ENCODE measurements at regions of chr12 and their contacts with region 1.

Region 1: GRCh38 chr12:89470741-89471509 is 53.7 kb downstream of the GALNT4 start:
- DNase-seq: no peak
- H3K4me3 Mint-ChIP-seq: no peak overlapping the region
- H3K27ac Mint-ChIP-seq: peak overlapping the region; percentile 84
- H3K4me1 Mint-ChIP-seq: peaks cover 81% of the 10 kb centered on the region
- H3K27me3 Mint-ChIP-seq: no peaks in the 10 kb centered on the region

Region 2: DNA sequence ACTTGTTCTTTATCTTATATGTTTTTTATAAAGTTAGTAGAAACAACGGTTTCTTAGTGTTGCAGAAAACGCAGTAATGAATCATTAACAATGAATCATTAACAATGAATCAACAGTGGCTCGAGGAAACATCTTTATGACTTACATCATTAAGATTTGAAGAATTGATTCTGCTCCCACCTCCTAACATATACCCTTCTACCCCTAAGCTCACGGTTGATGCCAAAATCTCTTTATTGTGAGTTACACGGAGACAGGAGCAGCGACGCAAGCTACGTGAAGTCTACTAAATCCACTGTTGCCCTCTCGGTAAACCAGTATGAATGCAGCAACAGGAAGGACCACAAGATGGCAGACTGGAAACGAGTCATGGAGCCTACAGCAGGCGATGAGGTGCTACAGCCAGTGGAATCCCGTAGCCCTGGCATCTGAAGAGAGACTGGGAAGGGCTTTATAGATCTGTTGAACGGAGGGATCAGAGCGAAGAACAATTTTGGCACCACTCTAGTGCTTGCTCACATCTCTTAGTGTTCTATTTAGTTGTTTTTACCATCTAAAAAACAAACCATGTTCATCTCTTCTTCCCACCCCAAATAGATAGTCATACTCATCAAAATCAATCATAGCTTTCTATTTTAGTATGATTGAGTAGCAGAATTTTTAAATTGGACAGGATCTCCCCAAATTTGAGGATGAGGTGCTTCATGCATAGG is 451.4 kb before region 1 on chr12:
- CTCF ChIA-PET with region 1: interaction called, 35 read pairs
- POLR2A ChIA-PET with region 1: interaction called, 5 read pairs
- DNase-seq: peak; percentile 85
- H3K4me3 Mint-ChIP-seq: no peak overlapping the region
- H3K27ac Mint-ChIP-seq: no peak overlapping the region
- H3K4me1 Mint-ChIP-seq: peaks cover 26% of the 10 kb centered on the region
- H3K27me3 Mint-ChIP-seq: peaks cover 4% of the 10 kb centered on the region

Region 3: DNA sequence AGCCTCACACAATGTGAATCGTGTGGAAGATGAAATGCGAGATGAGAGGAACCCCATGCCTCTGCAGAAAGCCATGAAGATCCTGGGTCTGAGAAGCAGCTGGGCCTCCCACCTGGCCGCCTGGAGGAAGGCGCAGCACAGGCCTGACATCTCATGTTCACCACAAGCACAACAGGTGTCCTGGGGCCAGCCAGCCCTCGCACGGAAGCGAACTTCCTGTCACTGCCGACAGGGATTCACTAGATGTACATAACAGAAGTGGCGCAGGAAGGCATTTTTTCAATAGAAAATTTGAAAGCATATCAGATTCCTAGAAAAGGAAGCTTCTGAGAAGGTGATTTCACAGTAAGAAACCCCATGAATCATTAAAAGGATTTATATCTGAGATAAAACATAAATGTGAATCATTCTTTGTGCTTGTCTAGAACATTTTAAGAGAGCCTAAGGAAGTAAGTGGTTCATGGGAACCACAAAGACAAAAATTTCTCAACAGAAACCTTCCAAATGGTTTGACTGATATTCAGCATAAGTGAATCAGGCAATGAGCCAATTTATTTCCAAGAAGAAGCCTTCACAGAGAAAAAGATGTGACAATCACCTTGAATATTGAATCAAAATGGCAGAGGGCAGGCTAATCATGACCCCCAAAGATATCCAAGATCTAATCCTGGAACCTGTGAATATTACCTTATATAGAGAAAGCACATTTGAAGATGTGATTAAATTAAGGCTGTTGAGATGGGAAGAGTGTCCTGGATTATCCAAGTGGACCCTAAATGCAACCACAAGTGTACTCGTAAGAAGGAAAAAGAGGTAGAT is 430.6 kb before region 1 on chr12:
- CTCF ChIA-PET with region 1: interaction called, 8 read pairs
- POLR2A ChIA-PET with region 1: interaction called, 42 read pairs
- DNase-seq: peak; percentile 90
- H3K4me3 Mint-ChIP-seq: peak overlapping the region; percentile 35
- H3K27ac Mint-ChIP-seq: peak overlapping the region; percentile 96
- H3K4me1 Mint-ChIP-seq: peaks cover 58% of the 10 kb centered on the region
- H3K27me3 Mint-ChIP-seq: no peaks in the 10 kb centered on the region

Region 4: GRCh38 chr12:89439941-89440340 is 31.0 kb before region 1 on chr12:
- CTCF ChIA-PET with region 1: no interaction called
- POLR2A ChIA-PET with region 1: no interaction called
- DNase-seq: no peak
- H3K4me3 Mint-ChIP-seq: no peak overlapping the region
- H3K27ac Mint-ChIP-seq: no peak overlapping the region
- H3K4me1 Mint-ChIP-seq: peaks cover 11% of the 10 kb centered on the region
- H3K27me3 Mint-ChIP-seq: no peaks in the 10 kb centered on the region

Region 5: GRCh38 chr12:89451841-89452251 is 19.1 kb before region 1 on chr12:
- CTCF ChIA-PET with region 1: interaction called, 3 read pairs
- POLR2A ChIA-PET with region 1: interaction called, 10 read pairs
- DNase-seq: no peak
- H3K4me3 Mint-ChIP-seq: no peak overlapping the region
- H3K27ac Mint-ChIP-seq: no peak overlapping the region
- H3K4me1 Mint-ChIP-seq: peaks cover 36% of the 10 kb centered on the region
- H3K27me3 Mint-ChIP-seq: no peaks in the 10 kb centered on the region

Region 6: DNA sequence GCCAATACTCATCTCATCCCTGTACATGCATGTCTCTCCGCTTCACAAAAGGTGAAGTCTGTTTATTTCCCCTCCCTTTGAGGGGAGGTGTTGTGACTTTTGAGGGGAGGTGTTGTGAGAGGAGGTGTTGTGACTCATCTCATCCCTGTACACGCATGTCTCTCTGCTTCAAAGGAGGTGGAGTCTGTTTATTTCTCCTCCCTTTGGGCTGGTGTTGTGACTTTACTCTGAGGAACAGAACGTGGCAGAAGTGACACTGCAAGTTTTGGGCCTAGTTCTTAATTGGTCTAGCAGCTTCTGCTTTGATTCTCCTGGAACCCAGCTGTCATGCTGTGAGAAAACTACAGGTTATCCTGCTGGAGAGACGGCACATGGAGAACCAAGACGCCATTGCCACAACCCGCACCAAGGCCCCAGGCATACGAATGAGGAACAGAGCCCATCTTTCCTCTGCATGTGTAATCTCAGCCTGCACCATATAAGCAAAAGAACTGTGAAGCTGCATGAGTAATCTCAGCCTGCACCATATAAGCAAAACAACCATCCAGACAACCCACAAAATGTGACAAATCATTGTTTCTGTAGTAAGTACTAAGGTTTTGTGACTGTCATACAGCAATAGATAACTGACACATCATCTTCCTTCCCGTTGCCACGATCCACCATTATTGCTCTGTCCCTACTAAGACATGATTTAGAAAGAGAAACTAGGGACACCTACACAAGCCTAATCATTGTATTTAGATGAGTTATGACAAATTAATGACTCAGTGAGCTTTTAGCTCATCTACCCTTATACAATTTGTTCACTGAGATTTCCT is 23.7 kb after region 1 on chr12:
- CTCF ChIA-PET with region 1: no interaction called
- POLR2A ChIA-PET with region 1: interaction called, 19 read pairs
- DNase-seq: peak; percentile 45
- H3K4me3 Mint-ChIP-seq: peak overlapping the region; percentile 8
- H3K27ac Mint-ChIP-seq: peak overlapping the region; percentile 92
- H3K4me1 Mint-ChIP-seq: peaks cover 30% of the 10 kb centered on the region
- H3K27me3 Mint-ChIP-seq: no peaks in the 10 kb centered on the region

Region 7: GRCh38 chr12:89514751-89515150 is 43.8 kb after region 1 on chr12:
- CTCF ChIA-PET with region 1: interaction called, 10 read pairs
- POLR2A ChIA-PET with region 1: interaction called, 3 read pairs
- DNase-seq: no peak
- H3K4me3 Mint-ChIP-seq: no peak overlapping the region
- H3K27ac Mint-ChIP-seq: no peak overlapping the region
- H3K4me1 Mint-ChIP-seq: peaks cover 21% of the 10 kb centered on the region
- H3K27me3 Mint-ChIP-seq: no peaks in the 10 kb centered on the region

Region 8: GRCh38 chr12:89524541-89525285 is 53.8 kb after region 1 on chr12 and contains the start of gene GALNT4:
- CTCF ChIA-PET with region 1: interaction called, 209 read pairs
- POLR2A ChIA-PET with region 1: interaction called, 111 read pairs
- DNase-seq: peak; percentile 84
- H3K4me3 Mint-ChIP-seq: peak within 1 kb of the TSS; percentile 90
- H3K27ac Mint-ChIP-seq: peak within 1 kb of the TSS; percentile 94
- H3K4me1 Mint-ChIP-seq: peaks cover 69% of the 10 kb centered on the region
- H3K27me3 Mint-ChIP-seq: no peaks in the 10 kb centered on the region
- total RNA-seq, gene GALNT4: 21.5 to 23.3 TPM

Measured in activated CD4-positive, alpha-beta memory T cell treated with anti-CD3 and anti-CD28 coated beads, Interleukin-2, amount 10 ng/mL, durations not matched to agents 7 days and 5 days (primary cell).